Naive thymus-derived CD8-positive, alpha-beta T cell (primary cell): ENCODE measurements at regions of chr10 and their contacts with region 1.

Region 1: DNA sequence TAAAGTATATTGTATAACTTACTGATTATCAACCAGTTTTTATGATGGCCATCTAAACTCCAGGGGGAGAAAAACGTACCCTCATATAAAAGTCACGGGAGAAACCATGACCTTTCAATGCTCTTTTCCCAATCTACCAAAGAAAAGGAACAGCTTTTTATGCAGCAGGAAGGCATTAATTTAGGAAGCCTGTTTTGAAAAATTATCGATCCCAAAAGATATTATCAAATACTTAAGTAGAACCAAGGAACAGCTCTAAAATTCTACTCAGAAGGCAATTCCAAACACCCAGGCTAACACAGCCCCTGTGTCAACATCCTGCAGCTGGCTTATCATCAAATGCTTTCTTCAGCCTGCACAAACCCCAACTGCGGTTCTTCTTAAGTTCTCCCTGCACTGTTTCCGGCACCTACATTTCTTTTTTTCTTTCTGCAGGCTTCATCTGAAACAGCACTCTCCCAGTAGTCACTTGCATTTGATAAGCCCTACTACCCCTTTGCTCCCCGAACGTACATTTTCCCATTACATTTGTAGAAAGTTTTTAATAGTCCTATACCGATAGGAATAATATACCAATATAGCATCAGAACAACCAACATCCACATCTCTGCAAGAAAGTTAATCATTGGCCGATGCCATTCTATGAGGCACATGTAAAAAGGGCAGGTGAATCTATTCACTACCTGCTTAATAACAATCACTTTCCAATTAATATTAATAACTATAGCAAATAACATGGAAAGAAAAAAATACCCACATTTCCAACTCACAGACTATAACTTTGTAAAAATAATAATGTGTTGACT is 47.9 kb downstream of the PIP4K2A start:
- DNase-seq: peak; percentile 16 to 91 (median 76)
- ATAC-seq: peak; percentile 86 to 91
- H3K4me3 Mint-ChIP-seq: peak overlapping the region; percentile 77 to 93 (median 88)
- H3K27ac Mint-ChIP-seq: peak overlapping the region; percentile 85 to 96 (median 90)
- H3K4me1 Mint-ChIP-seq: peaks cover 38 to 93% (median 79%) of the 10 kb centered on the region in 4 donors
- H3K27me3 Mint-ChIP-seq: no peaks in the 10 kb centered on the region

Region 2: DNA sequence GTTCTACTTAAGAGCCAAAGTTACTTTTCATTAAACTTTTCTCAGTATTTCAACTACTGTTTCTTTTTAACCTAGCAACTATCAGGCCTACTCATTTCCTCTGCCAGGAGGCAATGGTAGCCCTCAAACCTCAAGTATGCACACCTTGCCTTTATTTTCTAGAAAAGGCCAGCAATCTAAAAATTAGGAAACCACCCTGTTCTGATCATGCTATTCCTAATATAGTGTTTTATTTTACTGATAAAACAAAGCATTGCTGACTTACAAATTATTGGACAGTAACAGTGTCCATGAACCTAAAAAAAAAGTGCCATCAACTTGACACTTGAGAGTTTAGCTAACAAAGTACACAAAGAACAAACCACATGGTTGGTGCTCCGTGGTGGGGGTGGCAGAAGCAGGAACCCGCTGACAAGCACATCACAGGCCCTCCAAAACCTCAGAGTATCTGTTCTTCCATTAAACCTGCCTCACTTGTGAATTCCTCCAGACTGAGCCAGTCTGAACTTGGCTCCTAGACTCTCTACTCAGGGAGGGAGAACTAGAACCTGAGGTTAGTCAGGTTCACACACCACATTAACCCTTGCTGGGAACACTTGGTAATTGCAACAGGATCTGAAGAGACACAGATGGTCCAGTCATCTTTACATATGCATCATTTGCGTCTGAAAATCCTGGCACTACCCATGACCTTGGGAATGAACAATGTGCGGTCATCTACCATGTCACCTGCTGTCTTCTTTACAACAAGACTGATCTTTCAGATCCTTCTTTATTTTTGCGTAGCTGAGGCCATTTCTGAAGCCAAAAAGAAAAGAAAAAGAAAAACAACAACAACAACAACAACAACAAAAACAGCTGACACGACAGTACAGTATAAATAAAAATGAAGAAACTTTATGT is 16.0 kb after region 1 on chr10:
- POLR2A ChIA-PET with region 1: interaction called, 71 read pairs
- DNase-seq: peak; percentile 20 to 85 (median 70)
- ATAC-seq: peak; percentile 66 to 76
- H3K4me3 Mint-ChIP-seq: peak overlapping the region; percentile 59 to 90 (median 80)
- H3K27ac Mint-ChIP-seq: peak overlapping the region; percentile 93 to 99 (median 97)
- H3K4me1 Mint-ChIP-seq: peaks cover 48 to 92% (median 86%) of the 10 kb centered on the region in 4 donors
- H3K27me3 Mint-ChIP-seq: no peaks in the 10 kb centered on the region